Dorsolateral prefrontal cortex (tissue), 120 donors: ENCODE measurements at regions of chr11 and their contacts with region 1.

Region 1: GRCh38 chr11:35822815-35823495 is 120.9 kb upstream of the LDLRAD3 start:
- DNase-seq: no peak
- H3K4me3 ChIP-seq: no peak overlapping the region
- H3K27ac ChIP-seq: peak overlapping the region in 15 of 59 donors; percentile 4 to 88 (median 78)
- H3K27me3 ChIP-seq: no peaks in the 10 kb centered on the region
- CTCF ChIP-seq: no peak

Region 2: DNA sequence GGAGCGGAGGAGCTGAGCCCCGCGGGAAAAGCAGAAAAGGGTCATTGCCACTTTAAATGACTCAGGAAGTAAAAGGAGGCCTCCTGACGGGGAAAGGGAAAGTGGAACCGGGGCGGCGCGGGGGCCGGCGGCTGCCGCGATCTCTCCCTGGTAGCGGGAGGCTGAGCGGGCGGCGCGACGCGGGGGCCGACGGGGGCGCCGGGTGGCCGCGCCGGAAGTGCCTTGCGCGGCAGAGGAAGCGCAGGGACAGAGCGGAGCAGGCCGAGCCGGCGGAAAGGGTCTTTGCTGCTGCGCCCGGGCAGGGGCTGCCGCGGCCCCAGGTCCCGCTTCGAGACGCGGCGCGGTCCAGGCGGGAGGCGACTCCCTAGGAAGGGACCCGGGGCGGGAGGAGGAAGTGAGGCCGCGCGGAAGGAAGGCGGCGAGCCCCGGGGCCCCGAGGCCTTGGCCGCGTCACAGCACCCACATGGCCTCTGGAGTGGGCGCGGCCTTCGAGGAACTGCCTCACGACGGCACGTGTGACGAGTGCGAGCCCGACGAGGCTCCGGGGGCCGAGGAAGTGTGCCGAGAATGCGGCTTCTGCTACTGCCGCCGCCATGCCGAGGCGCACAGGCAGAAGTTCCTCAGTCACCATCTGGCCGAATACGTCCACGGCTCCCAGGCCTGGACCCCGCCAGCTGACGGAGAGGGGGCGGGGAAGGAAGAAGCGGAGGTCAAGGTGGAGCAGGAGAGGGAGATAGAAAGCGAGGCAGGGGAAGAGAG is 160.1 kb before region 1 on chr11 and contains the start of gene TRIM44:
- intact Hi-C with region 1: loop called in 1 of 2 experiments (anchors 5 kb)
- DNase-seq: peak; percentile 70 to 90 (median 84)
- H3K4me3 ChIP-seq: peak within 1 kb of the TSS; percentile 64 to 96 (median 86)
- H3K27ac ChIP-seq: peak within 1 kb of the TSS; percentile 79 to 99 (median 93)
- H3K27me3 ChIP-seq: no peaks in the 10 kb centered on the region
- CTCF ChIP-seq: peak in 16 of 56 donors; percentile 1 to 41 (median 16)
- total RNA-seq, gene TRIM44: 74.7 to 169 (median 126) TPM

Region 3: DNA sequence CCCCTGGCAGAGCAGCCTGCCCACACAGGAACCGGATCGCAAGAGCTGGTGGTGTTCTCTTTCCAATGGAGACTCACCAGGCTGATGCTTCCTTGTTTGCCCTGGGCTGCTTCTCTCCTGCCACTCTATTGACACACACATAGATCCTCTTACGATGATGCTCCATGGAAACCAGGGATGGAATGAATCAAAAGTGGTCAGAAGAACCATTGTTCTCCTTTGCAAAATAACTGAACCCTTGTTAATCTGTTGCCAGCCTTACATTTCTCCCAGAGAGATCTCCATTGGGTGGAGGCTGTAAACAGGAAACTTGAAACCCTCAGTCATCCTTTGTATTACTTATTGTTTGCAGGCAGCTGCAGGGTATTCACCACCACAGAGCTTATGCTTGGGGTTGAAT is 96.3 kb after region 1 on chr11:
- intact Hi-C with region 1: loop called in 1 of 2 experiments (anchors 5 kb)
- DNase-seq: peak in 1 of 10 donors; percentile 14
- H3K4me3 ChIP-seq: peak overlapping the region in 30 of 59 donors; percentile 1 to 54 (median 23)
- H3K27ac ChIP-seq: peak overlapping the region in 53 of 59 donors; percentile 1 to 96 (median 70)
- H3K27me3 ChIP-seq: no peaks in the 10 kb centered on the region
- CTCF ChIP-seq: peak in 1 of 56 donors; percentile 9

Region 4: GRCh38 chr11:35932681-35933319 is 109.8 kb after region 1 on chr11:
- intact Hi-C with region 1: no loop called
- DNase-seq: no peak
- H3K4me3 ChIP-seq: no peak overlapping the region
- H3K27ac ChIP-seq: no peak overlapping the region
- H3K27me3 ChIP-seq: no peaks in the 10 kb centered on the region
- CTCF ChIP-seq: no peak

Region 5: DNA sequence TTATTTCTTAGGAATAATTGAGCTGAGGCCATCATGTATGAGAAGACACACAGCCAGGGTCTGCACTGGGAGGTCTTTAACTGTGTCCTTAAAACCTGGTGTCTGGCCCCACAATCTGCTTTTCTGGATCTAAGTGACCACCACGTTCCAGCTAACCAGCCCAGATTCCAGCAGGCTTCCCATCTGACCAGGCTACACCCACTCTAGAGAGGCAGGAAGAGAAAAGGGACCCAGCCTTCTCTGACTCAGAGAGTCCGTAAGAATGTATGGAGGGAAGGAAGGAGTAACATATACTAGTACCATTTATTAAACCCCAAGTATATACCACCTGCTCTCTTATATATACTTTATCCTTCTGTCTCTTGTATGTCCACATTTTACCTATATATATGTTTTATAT is 201.0 kb after region 1 on chr11:
- intact Hi-C with region 1: loop called (anchors 5 to 10 kb)
- DNase-seq: no peak
- H3K4me3 ChIP-seq: no peak overlapping the region
- H3K27ac ChIP-seq: no peak overlapping the region
- H3K27me3 ChIP-seq: no peaks in the 10 kb centered on the region
- CTCF ChIP-seq: no peak

Region 6: DNA sequence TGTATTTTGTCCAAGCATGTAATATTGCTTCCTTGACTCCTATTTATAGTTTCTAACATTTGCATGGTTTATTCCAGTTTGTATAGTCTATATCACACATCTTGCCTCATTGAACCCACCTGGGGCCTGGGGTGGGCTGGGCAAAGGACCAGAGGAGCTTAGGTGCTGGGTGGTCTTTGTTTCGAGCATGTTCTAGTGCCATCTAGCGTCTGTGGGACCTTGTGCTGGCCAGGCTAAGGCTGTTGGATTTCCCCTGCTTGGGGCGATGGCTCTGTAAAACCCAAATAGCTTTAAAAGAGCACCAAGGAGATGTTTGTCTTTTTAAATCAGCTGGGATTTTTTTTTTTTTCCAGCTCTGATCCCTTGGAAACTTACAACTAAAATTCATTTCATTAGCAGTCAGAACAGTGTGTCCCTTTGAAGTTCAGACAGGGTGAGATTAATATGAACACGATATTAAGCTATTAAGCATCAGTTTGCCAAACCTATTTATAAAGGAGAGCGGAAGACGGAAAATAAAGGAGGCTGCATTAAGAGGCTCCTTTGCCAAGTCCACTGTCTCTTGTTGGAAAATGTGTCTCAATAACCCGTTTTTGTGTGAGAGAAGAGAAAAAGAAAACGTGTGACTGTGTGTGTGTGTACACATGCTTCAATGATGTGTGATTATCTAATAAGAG is 308.9 kb after region 1 on chr11:
- intact Hi-C with region 1: loop called (anchors 2 to 5 kb)
- DNase-seq: peak in 9 of 10 donors; percentile 51 to 78 (median 65)
- H3K4me3 ChIP-seq: no peak overlapping the region
- H3K27ac ChIP-seq: peak overlapping the region in 9 of 59 donors; percentile 2 to 30 (median 19)
- H3K27me3 ChIP-seq: no peaks in the 10 kb centered on the region
- CTCF ChIP-seq: peak; percentile 44 to 89 (median 75)

Region 7: DNA sequence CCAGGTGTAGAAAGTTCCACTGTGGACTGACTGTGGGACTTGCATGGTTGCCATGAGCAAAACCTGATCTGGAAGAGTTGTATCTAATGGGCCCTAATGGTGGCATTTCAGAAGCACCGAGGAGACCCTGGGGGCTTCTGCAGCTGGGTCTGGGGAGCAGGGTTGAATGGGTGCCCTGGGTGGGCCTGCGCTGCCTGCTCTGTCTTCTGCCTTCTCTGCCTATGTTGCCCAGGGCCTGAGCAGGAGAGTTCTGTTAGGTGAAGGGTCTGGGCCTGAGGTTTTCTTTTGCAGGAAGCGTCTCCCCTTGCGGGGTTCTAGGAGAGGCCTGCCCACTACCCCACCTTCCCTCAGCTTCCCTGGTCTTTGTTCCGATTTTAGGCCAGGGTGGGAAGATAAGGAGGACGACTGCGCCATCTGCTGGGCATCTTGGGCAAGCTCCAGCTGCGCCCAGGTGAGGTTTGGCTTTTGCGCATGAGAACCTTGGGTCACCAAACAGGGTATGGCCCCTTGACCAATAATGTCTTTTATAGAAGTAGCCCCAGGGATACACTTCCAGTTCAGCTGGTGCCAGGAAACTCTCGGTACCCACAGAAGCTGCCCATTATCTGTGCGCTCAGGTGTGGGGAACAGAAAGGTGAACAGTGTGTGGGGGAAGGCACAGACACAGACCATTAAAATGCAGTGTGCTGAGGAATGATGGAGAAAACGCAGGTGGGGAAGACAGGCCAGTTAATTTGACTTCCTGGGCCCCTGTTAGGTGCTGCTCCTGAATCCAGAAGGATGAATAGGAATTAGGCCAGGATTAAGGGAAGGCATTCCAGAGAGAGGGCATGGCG is 443.1 kb after region 1 on chr11:
- intact Hi-C with region 1: loop called in 1 of 2 experiments (anchors 10 kb)
- DNase-seq: peak in 6 of 10 donors; percentile 27 to 65 (median 46)
- H3K4me3 ChIP-seq: no peak overlapping the region
- H3K27ac ChIP-seq: no peak overlapping the region
- H3K27me3 ChIP-seq: no peaks in the 10 kb centered on the region
- CTCF ChIP-seq: peak; percentile 60 to 91 (median 81)

Region 8: DNA sequence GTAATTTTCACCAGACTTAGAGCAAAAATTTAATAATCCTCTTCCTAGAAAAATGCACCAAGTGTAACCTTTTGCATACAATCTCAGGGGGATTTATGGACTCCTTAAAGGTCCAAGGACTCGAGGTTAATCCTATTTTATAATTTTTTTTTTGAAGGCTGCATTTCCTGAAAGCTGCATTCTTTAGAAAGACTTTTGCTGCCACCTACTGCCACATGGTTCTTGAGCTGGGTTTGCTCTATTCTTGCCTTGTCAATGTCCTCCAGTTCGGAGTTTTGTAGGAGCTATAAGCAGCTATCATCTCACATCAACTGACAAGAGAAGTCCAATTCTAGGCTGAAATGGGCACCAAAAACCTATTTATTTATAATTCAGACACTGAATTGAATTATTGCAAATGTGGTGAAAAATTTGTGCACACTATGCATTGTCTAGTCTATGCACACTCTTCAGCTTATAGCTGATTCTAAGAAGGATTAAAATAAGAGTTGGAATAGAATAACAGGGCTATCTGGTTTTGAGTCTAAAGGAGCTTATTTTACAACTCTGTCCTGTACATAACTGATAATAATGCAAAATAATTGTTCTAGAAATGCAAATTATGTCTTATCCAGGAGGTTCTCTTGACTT is 655.9 kb after region 1 on chr11:
- intact Hi-C with region 1: loop called in 1 of 2 experiments (anchors 10 kb)
- DNase-seq: peak in 3 of 10 donors; percentile 25 to 71 (median 61)
- H3K4me3 ChIP-seq: no peak overlapping the region
- H3K27ac ChIP-seq: peak overlapping the region in 21 of 59 donors; percentile 1 to 70 (median 27)
- H3K27me3 ChIP-seq: no peaks in the 10 kb centered on the region
- CTCF ChIP-seq: peak in 55 of 56 donors; percentile 53 to 90 (median 76)